HEK293T (cell line): ENCODE measurements at regions of chr20 and their contacts with region 1.

Region 1: DNA sequence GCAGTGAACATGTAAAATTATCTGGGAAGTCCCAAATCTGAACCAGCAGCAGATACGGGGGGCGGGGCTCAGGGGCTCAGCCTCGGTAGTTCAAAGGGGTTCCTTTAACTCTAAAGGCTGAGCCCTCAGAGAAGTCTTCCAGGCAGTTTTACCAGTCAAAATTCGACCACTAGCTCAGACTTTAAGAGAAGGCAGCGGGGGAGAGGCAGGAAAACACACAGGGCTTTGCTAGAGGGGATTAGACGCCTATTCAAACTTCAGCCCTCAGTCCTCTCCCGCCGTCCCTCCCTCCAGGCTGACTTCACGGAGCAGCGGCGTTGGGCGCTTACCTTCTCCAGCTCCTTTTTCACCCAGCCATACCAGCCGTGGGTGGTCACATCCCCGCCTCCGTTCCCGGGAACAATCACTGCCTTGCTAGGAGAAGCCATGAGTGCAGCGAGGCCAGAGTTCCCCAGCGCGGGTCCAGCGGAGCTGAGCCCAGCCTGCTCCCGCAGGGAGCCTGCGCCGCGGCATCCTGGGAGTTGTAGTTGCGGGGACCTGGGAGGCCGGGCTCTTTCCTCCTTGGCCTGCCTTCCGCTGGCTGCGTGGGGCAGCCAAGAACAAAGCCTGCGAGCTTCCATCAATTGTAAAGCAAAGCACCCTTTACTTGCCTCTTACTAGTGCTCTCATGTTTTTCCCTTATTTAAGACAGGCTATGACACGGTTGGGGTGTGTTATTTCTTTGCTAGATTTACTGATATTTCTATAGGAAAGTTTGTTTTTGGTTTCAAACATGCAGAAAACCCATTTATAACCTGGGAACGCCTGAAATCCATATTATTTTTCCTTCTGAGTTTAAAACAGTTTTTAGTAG is at the start of gene RBBP9:
- DNase-seq: peak; percentile 86

Region 2: GRCh38 chr20:18431206-18431605 is 65.8 kb before region 1 on chr20:
- CTCF ChIA-PET with region 1: no interaction called
- POLR2A ChIA-PET with region 1: no interaction called
- DNase-seq: peak; percentile 49

Region 3: GRCh38 chr20:18443835-18444234 is 53.1 kb before region 1 on chr20:
- CTCF ChIA-PET with region 1: no interaction called
- POLR2A ChIA-PET with region 1: no interaction called
- DNase-seq: no peak

Region 4: GRCh38 chr20:18507218-18508021 is 10.5 kb after region 1 on chr20 and contains the start of gene SEC23B:
- CTCF ChIA-PET with region 1: interaction called, 6 read pairs
- POLR2A ChIA-PET with region 1: interaction called, 113 read pairs
- DNase-seq: peak; percentile 92